Activated T-helper 2 cell treated with anti-CD3 and anti-CD28 coated beads, Interferon-gamma antibody, Interleukin-2, Interleukin-4, amounts not matched to agents 10 μg/mL and 5 μg/mL and 100 μg/mL, durations not matched to agents 14 hours and 24 hours and 36 hours (primary cell): ENCODE measurements at regions of chr19 and their contacts with region 1.

Region 1: DNA sequence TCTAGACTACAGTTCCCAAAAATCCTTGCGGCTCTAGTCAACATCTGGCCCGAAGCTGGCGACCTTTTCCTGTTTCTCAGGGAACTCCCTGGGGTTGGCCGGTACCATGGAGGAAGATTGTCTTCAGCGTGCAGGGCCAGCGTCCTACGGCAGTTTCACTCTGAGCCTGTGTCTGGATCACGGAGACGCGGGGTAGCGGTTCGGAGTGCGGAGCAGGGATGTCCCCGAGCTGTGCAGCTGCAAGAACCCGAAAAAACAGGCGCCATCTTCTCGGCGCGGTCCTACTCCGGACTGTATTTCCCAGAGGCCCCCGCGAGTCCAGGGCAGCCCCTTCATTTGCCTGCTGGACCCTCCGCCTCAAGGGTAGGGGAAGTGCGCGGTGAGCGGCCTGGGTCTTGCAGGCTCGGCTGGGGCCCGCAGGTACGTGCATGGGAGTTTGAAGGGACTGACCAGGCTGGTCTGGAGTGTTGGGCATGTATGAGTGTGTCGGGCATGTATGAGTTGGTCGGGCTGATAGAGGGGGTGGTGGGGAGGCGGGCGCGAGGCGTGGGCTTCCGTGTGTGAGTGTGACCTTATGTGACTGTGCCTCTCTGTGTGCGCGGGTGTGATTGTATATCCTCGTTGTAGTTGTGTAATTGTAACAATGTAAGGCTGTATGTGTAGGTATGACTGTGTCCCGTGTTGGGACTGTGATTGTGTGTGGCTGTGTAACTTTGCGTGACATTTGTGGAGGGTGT is at the start of gene ZNF383:
- DNase-seq: peak; percentile 80
- H3K4me3 Mint-ChIP-seq: peak within 1 kb of the TSS; percentile 96
- H3K27ac Mint-ChIP-seq: peak within 1 kb of the TSS; percentile 91
- H3K4me1 Mint-ChIP-seq: peaks cover 11% of the 10 kb centered on the region
- H3K27me3 Mint-ChIP-seq: no peaks in the 10 kb centered on the region
- total RNA-seq, gene ZNF383: 5.2 and 7.4 TPM in 2 replicates

Region 2: GRCh38 chr19:36378625-36379509 is 839.2 kb before region 1 on chr19 and contains the start of gene ZFP14:
- intact Hi-C with region 1: loop called (anchors 5 kb)
- DNase-seq: peak; percentile 91
- H3K4me3 Mint-ChIP-seq: peak within 1 kb of the TSS; percentile 85
- H3K27ac Mint-ChIP-seq: peak within 1 kb of the TSS; percentile 86
- H3K4me1 Mint-ChIP-seq: peaks cover 12% of the 10 kb centered on the region
- H3K27me3 Mint-ChIP-seq: no peaks in the 10 kb centered on the region
- total RNA-seq, gene ZFP14: 2.0 and 2.4 TPM in 2 replicates

Region 3: GRCh38 chr19:36772311-36773222 is 445.5 kb before region 1 on chr19 and contains the start of gene ZNF850:
- intact Hi-C with region 1: loop called (anchors 10 kb)
- DNase-seq: peak; percentile 91
- H3K4me3 Mint-ChIP-seq: peak within 1 kb of the TSS; percentile 95
- H3K27ac Mint-ChIP-seq: peak within 1 kb of the TSS; percentile 90
- H3K4me1 Mint-ChIP-seq: peaks cover 20% of the 10 kb centered on the region
- H3K27me3 Mint-ChIP-seq: no peaks in the 10 kb centered on the region
- total RNA-seq, gene ZNF850: 3.3 and 4.7 TPM in 2 replicates

Region 4: DNA sequence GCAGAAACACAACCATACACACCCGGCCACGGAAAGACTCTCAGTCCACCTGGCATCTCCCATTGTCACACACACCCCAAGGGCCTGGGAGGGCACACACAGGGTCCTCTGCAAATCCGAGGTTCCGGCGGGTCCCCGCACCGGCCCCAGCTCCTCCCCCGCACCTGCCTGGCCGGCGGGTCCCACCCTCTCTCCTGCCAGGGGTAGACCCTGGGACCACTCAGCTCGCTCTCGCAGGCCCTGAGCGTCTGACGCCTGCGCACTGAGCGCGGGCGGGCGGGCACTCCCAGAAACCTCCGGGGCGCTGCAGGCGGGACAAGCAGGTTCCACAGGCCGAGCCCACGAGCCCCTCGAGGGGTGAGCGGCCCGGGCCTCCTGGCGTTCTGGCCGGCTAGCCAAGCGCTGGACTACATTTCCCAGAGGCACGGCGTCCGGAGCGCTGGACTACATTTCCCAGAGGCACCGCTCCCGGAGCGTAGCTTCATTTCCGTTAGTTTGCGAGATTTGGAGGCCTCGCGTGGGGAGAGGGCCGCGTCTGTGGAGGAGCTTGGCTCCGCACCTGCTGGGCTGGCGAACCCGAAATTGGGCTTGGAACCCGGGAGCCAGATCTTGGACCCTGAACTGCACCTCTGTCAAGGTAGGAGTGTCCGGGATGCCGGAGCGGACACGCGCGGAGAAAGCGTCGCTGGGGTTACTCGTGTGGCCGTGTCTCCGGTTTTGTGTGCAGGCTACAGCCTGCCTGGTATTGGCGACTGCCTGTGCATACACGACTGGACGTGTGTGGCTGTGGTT is 139.9 kb before region 1 on chr19 and contains the start of gene ZNF420:
- intact Hi-C with region 1: loop called (anchors 1 kb)
- DNase-seq: peak; percentile 85
- H3K4me3 Mint-ChIP-seq: peak within 1 kb of the TSS; percentile 97
- H3K27ac Mint-ChIP-seq: peak within 1 kb of the TSS; percentile 82
- H3K4me1 Mint-ChIP-seq: peaks cover 13% of the 10 kb centered on the region
- H3K27me3 Mint-ChIP-seq: no peaks in the 10 kb centered on the region
- total RNA-seq, gene ZNF420: 4.7 and 5.5 TPM in 2 replicates

Region 5: GRCh38 chr19:37594304-37594981 is 376.4 kb after region 1 on chr19 and contains the starts of genes ZNF540 and ZNF571:
- intact Hi-C with region 1: loop called (anchors 1 kb)
- DNase-seq: peak; percentile 82
- H3K4me3 Mint-ChIP-seq: peak within 1 kb of the TSS; percentile 90
- H3K27ac Mint-ChIP-seq: peak within 1 kb of the TSS; percentile 88
- H3K4me1 Mint-ChIP-seq: peaks cover 17% of the 10 kb centered on the region
- H3K27me3 Mint-ChIP-seq: no peaks in the 10 kb centered on the region
- total RNA-seq, gene ZNF540: 0.41 and 0.46 TPM in 2 replicates
- total RNA-seq, gene ZNF571: 0.50 and 0.67 TPM in 2 replicates